ENCODE measurements at regions of chr1 and their contacts with region 1.

Region 1: DNA sequence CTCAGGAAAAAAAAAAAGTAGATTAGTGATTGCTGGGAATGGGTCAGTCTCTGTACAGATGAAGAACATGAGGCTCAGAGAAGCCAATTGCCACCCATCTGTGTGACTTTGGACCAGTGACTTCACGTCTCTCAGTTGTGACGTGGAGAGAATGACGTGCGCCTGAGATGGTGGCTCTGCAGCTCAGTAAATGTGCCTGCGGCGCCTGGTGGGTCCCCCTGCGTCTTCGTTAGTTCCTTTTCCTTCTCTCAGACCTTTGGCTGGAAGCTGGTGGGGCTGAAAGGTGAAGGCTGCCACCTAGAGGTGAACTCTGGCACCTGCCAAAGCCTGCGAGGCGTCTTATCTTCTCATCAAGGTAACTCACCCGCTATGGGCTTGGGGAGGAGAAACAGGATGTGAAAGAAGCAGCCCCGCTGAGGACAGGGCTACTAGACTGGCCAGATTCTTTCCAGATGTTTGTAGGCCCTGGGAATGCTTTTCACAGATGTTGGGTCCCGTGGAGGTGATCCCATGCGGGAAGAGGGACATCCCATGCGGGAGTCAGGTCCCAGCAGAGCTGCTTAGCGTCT is 8.7 kb upstream of the E2F2 start:
- DNase-seq: peak; percentile 97
- H3K4me3 Mint-ChIP-seq: peak overlapping the region; percentile 33
- H3K27ac Mint-ChIP-seq: no peak overlapping the region
- H3K4me1 Mint-ChIP-seq: peaks cover 12% of the 10 kb centered on the region
- H3K27me3 Mint-ChIP-seq: no peaks in the 10 kb centered on the region

Region 2: DNA sequence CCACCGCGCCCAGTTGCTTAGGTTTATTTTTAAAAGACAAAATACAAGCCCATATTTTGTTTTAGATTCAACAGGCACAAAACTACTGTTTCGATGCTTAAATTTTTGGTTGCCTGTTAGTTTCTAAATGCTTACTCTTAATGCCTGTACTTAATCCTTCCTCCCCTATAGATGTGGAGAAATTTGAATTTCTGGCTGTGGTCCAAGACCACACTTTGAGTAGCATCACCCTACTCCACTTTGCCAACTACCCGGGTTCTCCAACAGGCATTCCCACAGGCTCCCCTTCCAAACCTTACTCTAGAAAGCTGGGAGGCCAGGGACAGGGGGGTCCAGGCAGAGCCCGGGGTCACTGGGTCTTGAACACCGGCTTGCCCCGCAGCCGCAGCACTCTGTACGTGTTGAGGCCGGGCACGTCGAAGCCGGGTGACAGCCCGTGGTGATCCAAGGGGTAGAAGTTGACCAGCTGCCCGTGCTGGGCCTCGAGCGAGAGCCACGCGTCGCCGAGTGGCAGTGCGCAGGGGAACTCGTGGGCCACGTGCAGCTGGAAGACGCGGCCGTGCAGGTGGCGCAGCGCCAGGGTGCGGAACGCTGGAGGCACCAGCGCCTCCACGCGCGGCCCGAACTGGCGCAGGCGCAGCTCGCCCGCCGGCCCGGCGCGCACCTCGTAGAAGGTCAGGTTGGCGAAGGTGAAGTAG is 586.9 kb before region 1 on chr1:
- CTCF ChIA-PET with region 1: no interaction called
- intact Hi-C with region 1: no loop called
- DNase-seq: no peak
- H3K4me3 Mint-ChIP-seq: no peak overlapping the region
- H3K27ac Mint-ChIP-seq: no peak overlapping the region
- H3K4me1 Mint-ChIP-seq: no peaks in the 10 kb centered on the region
- H3K27me3 Mint-ChIP-seq: peaks cover 20% of the 10 kb centered on the region

Region 3: GRCh38 chr1:23098463-23099170 is 441.2 kb before region 1 on chr1:
- CTCF ChIA-PET with region 1: no interaction called
- intact Hi-C with region 1: loop called (anchors 10 kb)
- DNase-seq: peak; percentile 76
- H3K4me3 Mint-ChIP-seq: no peak overlapping the region
- H3K27ac Mint-ChIP-seq: no peak overlapping the region
- H3K4me1 Mint-ChIP-seq: peaks cover 43% of the 10 kb centered on the region
- H3K27me3 Mint-ChIP-seq: no peaks in the 10 kb centered on the region

Region 4: GRCh38 chr1:23484253-23485001 is 55.4 kb before region 1 on chr1:
- CTCF ChIA-PET with region 1: interaction called, 7 read pairs
- intact Hi-C with region 1: loop called (anchors 1 kb)
- DNase-seq: peak; percentile 93
- H3K4me3 Mint-ChIP-seq: peak overlapping the region; percentile 83
- H3K27ac Mint-ChIP-seq: no peak overlapping the region
- H3K4me1 Mint-ChIP-seq: peaks cover 12% of the 10 kb centered on the region
- H3K27me3 Mint-ChIP-seq: peaks cover 15% of the 10 kb centered on the region

Region 5: GRCh38 chr1:23559136-23559984 is 19.6 kb after region 1 on chr1 and contains the start of gene ID3:
- CTCF ChIA-PET with region 1: interaction called, 18 read pairs
- intact Hi-C with region 1: no loop called
- DNase-seq: peak; percentile 94
- H3K4me3 Mint-ChIP-seq: peak within 1 kb of the TSS; percentile 82
- H3K27ac Mint-ChIP-seq: peak within 1 kb of the TSS; percentile 84
- H3K4me1 Mint-ChIP-seq: peaks cover 62% of the 10 kb centered on the region
- H3K27me3 Mint-ChIP-seq: peaks cover 3% of the 10 kb centered on the region
- total RNA-seq, gene ID3: 69.5 to 74.6 TPM

Region 6: GRCh38 chr1:23593558-23594149 is 53.9 kb after region 1 on chr1:
- CTCF ChIA-PET with region 1: no interaction called
- intact Hi-C with region 1: no loop called
- DNase-seq: peak; percentile 58
- H3K4me3 Mint-ChIP-seq: no peak overlapping the region
- H3K27ac Mint-ChIP-seq: peak overlapping the region; percentile 53
- H3K4me1 Mint-ChIP-seq: peaks cover 78% of the 10 kb centered on the region
- H3K27me3 Mint-ChIP-seq: no peaks in the 10 kb centered on the region

Region 7: GRCh38 chr1:23634842-23635651 is 95.3 kb after region 1 on chr1:
- CTCF ChIA-PET with region 1: interaction called, 402 read pairs
- intact Hi-C with region 1: loop called (anchors 1 kb)
- DNase-seq: peak; percentile 78
- H3K4me3 Mint-ChIP-seq: peak overlapping the region; percentile 41
- H3K27ac Mint-ChIP-seq: peak overlapping the region; percentile 68
- H3K4me1 Mint-ChIP-seq: peaks cover 27% of the 10 kb centered on the region
- H3K27me3 Mint-ChIP-seq: no peaks in the 10 kb centered on the region

Region 8: GRCh38 chr1:23664837-23665795 is 125.3 kb after region 1 on chr1:
- CTCF ChIA-PET with region 1: interaction called, 23 read pairs
- intact Hi-C with region 1: no loop called
- DNase-seq: peak; percentile 44
- H3K4me3 Mint-ChIP-seq: no peak overlapping the region
- H3K27ac Mint-ChIP-seq: peak overlapping the region; percentile 31
- H3K4me1 Mint-ChIP-seq: peaks cover 6% of the 10 kb centered on the region
- H3K27me3 Mint-ChIP-seq: no peaks in the 10 kb centered on the region